Panc1 (cell line): ENCODE measurements at regions of chr5 and their contacts with region 1.

Region 1: DNA sequence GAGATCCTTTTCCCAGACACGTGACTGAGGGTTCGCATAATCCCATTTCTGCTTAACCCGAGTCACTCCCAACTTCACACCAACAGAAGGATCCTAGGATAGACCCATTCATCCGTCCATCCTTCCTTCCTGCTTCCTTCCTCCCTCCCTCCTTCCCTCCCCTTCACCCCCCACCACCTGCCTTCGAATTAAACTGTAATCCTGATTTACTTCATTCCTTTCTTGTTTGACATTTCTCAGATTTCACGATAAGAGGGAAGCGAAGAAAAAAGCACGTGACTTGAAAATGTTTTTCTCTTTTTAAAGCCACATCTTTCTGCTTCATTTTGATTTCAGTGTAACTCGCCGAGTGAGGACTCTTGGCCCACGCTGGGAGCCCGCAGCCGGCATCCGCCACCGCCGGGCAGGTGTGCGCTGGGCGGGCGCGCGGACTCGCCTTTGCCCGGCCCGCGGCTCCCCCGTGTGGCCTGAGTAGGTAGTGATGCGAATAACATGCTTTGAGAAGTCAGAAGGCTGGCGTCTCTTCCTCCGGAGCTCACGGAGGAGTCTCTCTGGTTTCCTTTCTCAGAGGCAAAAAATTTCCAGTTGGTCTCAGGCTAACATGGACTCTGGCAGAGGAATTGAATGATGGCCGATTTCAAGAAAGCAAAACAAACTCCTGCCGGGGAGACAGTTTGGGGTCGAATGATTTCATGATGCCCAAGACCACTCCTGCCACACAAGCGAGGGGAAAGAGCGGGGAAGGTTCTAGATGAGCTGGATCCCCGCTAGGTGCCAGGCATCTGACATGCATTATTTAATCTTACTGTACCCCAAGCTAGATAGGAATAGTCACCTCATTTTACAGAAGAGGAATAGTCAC is 117.7 kb downstream of the SLC12A2 start:
- DNase-seq: no peak
- ATAC-seq: peak; percentile 89
- H3K4me3 ChIP-seq: peak overlapping the region; percentile 16 to 28; a peak in 3 of 4 replicates
- H3K27ac ChIP-seq: no peak overlapping the region
- H3K4me1 ChIP-seq: peaks cover 6% of the 10 kb centered on the region
- H3K27me3 ChIP-seq: peaks cover 2% of the 10 kb centered on the region; the same call in 1 of the 2 replicates
- CTCF ChIP-seq: peak; percentile 94

Region 2: GRCh38 chr5:127564002-127564769 is 637.1 kb before region 1 on chr5:
- CTCF ChIA-PET with region 1: interaction called, 4 read pairs
- POLR2A ChIA-PET with region 1: no interaction called
- in situ Hi-C with region 1: no loop called
- intact Hi-C with region 1: loop called (anchors 1 kb)
- DNase-seq: peak; percentile 42
- ATAC-seq: peak; percentile 94
- H3K4me3 ChIP-seq: no peak overlapping the region
- H3K27ac ChIP-seq: no peak overlapping the region
- H3K4me1 ChIP-seq: no peaks in the 10 kb centered on the region
- H3K27me3 ChIP-seq: no peaks in the 10 kb centered on the region; the same call in 1 of the 2 replicates
- CTCF ChIP-seq: peak; percentile 72

Region 3: GRCh38 chr5:127757576-127757975 is 443.7 kb before region 1 on chr5:
- CTCF ChIA-PET with region 1: no interaction called
- POLR2A ChIA-PET with region 1: no interaction called
- in situ Hi-C with region 1: no loop called
- intact Hi-C with region 1: loop called (anchors 5 kb)
- DNase-seq: peak; percentile 47
- ATAC-seq: no peak
- H3K4me3 ChIP-seq: no peak overlapping the region
- H3K27ac ChIP-seq: no peak overlapping the region
- H3K4me1 ChIP-seq: no peaks in the 10 kb centered on the region
- H3K27me3 ChIP-seq: no peaks in the 10 kb centered on the region
- CTCF ChIP-seq: peak; percentile 46

Region 4: DNA sequence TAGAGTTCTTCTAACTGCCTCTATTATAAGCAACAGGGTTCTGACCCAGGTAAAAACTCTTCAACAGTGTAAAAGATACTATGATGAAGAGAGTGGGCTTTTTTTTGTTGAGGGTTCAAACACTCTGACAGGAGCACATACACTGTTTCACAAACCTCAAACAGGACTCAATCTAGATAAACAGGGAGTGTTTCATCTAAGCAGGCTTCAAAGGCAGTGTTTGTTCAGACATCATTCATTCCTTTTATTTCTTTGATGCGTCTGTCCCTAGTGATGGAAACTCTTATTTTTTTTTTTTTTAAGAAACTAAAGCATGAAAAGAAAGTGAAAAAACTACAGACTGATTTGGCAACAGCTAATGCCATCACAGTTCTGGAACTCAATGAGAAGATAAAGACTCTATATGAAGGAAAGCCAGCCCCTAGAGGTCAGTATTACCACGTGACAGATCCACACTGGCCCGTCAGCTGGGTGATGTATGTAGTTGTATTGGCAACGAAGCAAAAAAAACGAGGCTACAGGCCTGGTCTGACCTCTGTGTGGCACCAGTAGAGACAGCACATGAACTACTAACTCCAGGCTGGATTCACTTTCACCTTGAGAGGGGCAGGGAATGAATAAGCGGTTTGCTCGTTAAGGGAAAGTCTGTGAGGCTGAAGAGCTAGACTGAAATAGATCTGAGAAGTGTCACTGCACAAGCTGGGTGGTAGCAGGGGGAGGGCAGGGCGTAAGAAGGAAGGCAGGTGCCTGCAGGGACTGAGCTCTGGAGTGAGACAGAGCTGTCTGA is 325.9 kb before region 1 on chr5:
- CTCF ChIA-PET with region 1: interaction called, 3 read pairs
- POLR2A ChIA-PET with region 1: no interaction called
- in situ Hi-C with region 1: no loop called
- intact Hi-C with region 1: loop called (anchors 2 kb)
- DNase-seq: peak; percentile 75
- ATAC-seq: peak; percentile 92
- H3K4me3 ChIP-seq: no peak overlapping the region
- H3K27ac ChIP-seq: no peak overlapping the region
- H3K4me1 ChIP-seq: no peaks in the 10 kb centered on the region
- H3K27me3 ChIP-seq: no peaks in the 10 kb centered on the region; the same call in 1 of the 2 replicates
- CTCF ChIP-seq: peak; percentile 69

Region 5: DNA sequence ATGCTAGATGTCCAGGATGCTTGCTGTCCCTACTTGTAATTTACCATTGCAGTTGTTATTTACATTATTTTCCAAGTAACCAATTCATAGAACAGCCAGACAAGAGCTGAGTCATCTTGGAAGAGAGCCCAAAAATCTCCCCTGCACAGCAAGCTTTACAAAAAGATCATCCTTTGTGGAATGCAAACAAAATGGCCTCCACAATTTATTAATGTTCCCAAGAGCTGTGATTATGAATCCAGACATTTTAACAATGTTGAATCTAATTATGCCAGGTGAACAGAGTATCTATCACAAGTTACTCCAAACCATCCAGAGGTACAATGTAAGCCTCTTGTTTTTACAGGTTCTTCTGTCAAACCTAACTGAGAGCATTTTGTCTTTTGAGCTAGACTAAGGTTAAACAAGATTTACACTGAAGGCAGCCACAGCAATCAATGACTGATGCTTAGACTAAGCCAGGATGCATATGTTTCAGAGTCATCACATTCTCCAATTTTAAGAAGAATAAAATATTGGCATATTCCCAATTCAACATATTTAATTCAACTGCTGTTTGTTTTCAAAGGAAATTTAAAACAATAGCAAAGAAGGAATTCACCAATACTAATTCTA is 213.0 kb before region 1 on chr5:
- CTCF ChIA-PET with region 1: no interaction called
- POLR2A ChIA-PET with region 1: no interaction called
- in situ Hi-C with region 1: no loop called
- intact Hi-C with region 1: no loop called
- DNase-seq: peak; percentile 73
- ATAC-seq: peak; percentile 72
- H3K4me3 ChIP-seq: no peak overlapping the region
- H3K27ac ChIP-seq: no peak overlapping the region
- H3K4me1 ChIP-seq: no peaks in the 10 kb centered on the region
- H3K27me3 ChIP-seq: no peaks in the 10 kb centered on the region
- CTCF ChIP-seq: no peak

Region 6: GRCh38 chr5:128083033-128083810 is 118.1 kb before region 1 on chr5 and contains the start of gene SLC12A2:
- CTCF ChIA-PET with region 1: no interaction called
- POLR2A ChIA-PET with region 1: no interaction called
- in situ Hi-C with region 1: no loop called
- intact Hi-C with region 1: loop called (anchors 2 kb)
- DNase-seq: peak; percentile 61
- ATAC-seq: peak; percentile 90
- H3K4me3 ChIP-seq: peak within 1 kb of the TSS; percentile 64 to 83
- H3K27ac ChIP-seq: peak within 1 kb of the TSS; percentile 94
- H3K4me1 ChIP-seq: peaks cover 35% of the 10 kb centered on the region
- H3K27me3 ChIP-seq: no peaks in the 10 kb centered on the region
- CTCF ChIP-seq: no peak
- total RNA-seq, gene SLC12A2: 36.9 TPM